Activated CD4-positive, alpha-beta T cell treated with anti-CD3 and anti-CD28 coated beads, Interleukin-2, amount 10 ng/mL, durations not matched to agents 7 days and 5 days (primary cell): ENCODE measurements at regions of chr22 and their contacts with region 1.

Region 1: GRCh38 chr22:50276143-50276542 is 6.0 kb upstream of the MAPK11 start:
- DNase-seq: peak; percentile 48
- H3K4me3 Mint-ChIP-seq: no peak overlapping the region
- H3K27ac Mint-ChIP-seq: no peak overlapping the region
- H3K4me1 Mint-ChIP-seq: peaks cover 6% of the 10 kb centered on the region
- H3K27me3 Mint-ChIP-seq: peaks cover 8% of the 10 kb centered on the region

Region 2: GRCh38 chr22:50293441-50294318 is 17.5 kb after region 1 on chr22:
- CTCF ChIA-PET with region 1: interaction called, 38 read pairs
- POLR2A ChIA-PET with region 1: no interaction called
- DNase-seq: no peak
- H3K4me3 Mint-ChIP-seq: no peak overlapping the region
- H3K27ac Mint-ChIP-seq: no peak overlapping the region
- H3K4me1 Mint-ChIP-seq: peaks cover 12% of the 10 kb centered on the region
- H3K27me3 Mint-ChIP-seq: peaks cover 22% of the 10 kb centered on the region

Region 3: GRCh38 chr22:50314455-50315288 is 38.5 kb after region 1 on chr22:
- CTCF ChIA-PET with region 1: interaction called, 13 read pairs
- POLR2A ChIA-PET with region 1: no interaction called
- DNase-seq: peak; percentile 77
- H3K4me3 Mint-ChIP-seq: peak overlapping the region; percentile 78
- H3K27ac Mint-ChIP-seq: peak overlapping the region; percentile 94
- H3K4me1 Mint-ChIP-seq: peaks cover 19% of the 10 kb centered on the region
- H3K27me3 Mint-ChIP-seq: no peaks in the 10 kb centered on the region

Region 4: DNA sequence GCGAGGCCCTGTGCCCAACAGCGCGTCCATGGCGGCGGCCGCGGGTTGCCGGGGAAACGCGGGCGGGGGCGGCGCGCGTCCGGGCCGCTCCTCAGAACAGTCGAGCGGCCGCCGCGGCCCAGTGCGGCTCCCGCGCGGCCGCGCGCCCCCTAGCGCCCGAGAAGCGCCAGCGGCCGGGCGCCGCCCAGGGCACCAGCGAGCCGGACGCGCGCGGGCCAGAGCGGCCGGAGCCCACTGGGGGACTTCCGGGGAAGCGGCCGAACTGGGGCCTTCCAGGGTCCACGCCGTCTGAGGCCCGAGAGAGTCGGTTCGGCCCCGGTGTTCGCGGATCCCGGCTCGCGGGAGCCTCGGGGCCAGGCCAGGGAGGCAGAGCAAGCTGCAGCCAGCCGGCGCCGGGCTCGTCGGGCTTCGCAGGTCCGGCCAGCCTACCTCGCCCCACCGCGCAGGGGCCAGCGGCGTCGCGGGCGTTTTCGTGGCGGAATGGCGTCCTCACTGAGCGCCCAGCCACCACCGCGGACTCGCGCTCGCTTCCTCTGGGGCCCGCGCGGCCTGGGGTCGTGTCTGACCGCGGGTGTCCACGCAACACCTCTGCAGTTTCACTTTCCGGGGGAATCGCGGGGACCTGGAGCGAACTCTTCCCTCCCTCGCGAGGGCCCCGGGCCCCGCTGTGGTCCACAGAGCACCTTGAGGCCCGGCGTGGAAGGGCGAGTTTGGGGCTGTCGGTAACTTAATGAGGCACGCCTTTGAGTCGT is 51.0 kb after region 1 on chr22 and contains the start of gene DENND6B:
- CTCF ChIA-PET with region 1: interaction called, 54 read pairs
- POLR2A ChIA-PET with region 1: no interaction called
- DNase-seq: peak; percentile 72
- H3K4me3 Mint-ChIP-seq: peak within 1 kb of the TSS; percentile 73
- H3K27ac Mint-ChIP-seq: peak within 1 kb of the TSS; percentile 88
- H3K4me1 Mint-ChIP-seq: peaks cover 13% of the 10 kb centered on the region
- H3K27me3 Mint-ChIP-seq: peaks cover 24% of the 10 kb centered on the region
- total RNA-seq, gene DENND6B: 3.1 to 3.6 TPM

Region 5: DNA sequence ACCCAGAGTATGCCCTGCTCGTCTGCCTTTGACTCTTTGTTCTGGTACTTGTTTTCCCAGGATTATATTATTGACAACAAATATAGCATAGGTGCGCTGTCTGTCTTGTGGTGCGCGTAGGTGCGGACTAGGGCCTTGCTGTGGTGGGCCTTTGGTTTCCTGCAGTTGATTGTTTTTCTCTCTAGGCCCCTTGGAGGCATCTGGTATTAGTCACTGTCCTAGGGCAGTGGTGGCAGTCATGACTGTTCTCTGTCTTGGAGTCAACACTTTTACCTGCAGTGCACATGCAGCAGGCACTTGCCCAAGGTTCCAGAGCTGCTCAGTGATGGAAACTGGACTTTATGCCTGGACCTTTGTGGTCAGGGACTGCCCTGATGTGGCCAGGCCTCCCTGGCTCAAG is 85.5 kb after region 1 on chr22:
- CTCF ChIA-PET with region 1: interaction called, 13 read pairs
- POLR2A ChIA-PET with region 1: no interaction called
- DNase-seq: no peak
- H3K4me3 Mint-ChIP-seq: no peak overlapping the region
- H3K27ac Mint-ChIP-seq: peak overlapping the region; percentile 15
- H3K4me1 Mint-ChIP-seq: peaks cover 34% of the 10 kb centered on the region
- H3K27me3 Mint-ChIP-seq: no peaks in the 10 kb centered on the region

Region 6: GRCh38 chr22:50620593-50621355 is 344.6 kb after region 1 on chr22:
- CTCF ChIA-PET with region 1: interaction called, 18 read pairs
- POLR2A ChIA-PET with region 1: no interaction called
- DNase-seq: peak; percentile 88
- H3K4me3 Mint-ChIP-seq: peak overlapping the region; percentile 82
- H3K27ac Mint-ChIP-seq: peak overlapping the region; percentile 100
- H3K4me1 Mint-ChIP-seq: peaks cover 48% of the 10 kb centered on the region
- H3K27me3 Mint-ChIP-seq: peaks cover 1% of the 10 kb centered on the region